Breast epithelium (tissue), 4 donors: ENCODE measurements at regions of chr6 and their contacts with region 1.

Region 1: GRCh38 chr6:32853541-32854375 is at the starts of genes PSMB9 and TAP1:
- DNase-seq: peak; percentile 85 to 92
- H3K4me3 ChIP-seq: peak within 1 kb of the TSS; percentile 76 to 99 (median 91)
- H3K27ac ChIP-seq: peak within 1 kb of the TSS; percentile 96 to 100
- H3K4me1 ChIP-seq: no peaks in the 10 kb centered on the region
- H3K27me3 ChIP-seq: no peaks in the 10 kb centered on the region
- CTCF ChIP-seq: peak; percentile 59 to 77 (median 67)
- POLR2A ChIP-seq: peak; percentile 93
- total RNA-seq, gene PSMB9: 16.8 to 25.9 (median 19.2) TPM
- total RNA-seq, gene TAP1: 24.2 to 40.6 (median 28.7) TPM

Region 2: GRCh38 chr6:32825966-32826365 is 27.8 kb before region 1 on chr6:
- intact Hi-C with region 1: loop called (anchors 1 kb)
- DNase-seq: no peak
- H3K4me3 ChIP-seq: no peak overlapping the region
- H3K27ac ChIP-seq: peak overlapping the region in 1 of 2 donors; percentile 48
- H3K4me1 ChIP-seq: no peaks in the 10 kb centered on the region
- H3K27me3 ChIP-seq: no peaks in the 10 kb centered on the region
- CTCF ChIP-seq: peak in 2 of 3 donors; percentile 29 to 43
- POLR2A ChIP-seq: no peak

Region 3: DNA sequence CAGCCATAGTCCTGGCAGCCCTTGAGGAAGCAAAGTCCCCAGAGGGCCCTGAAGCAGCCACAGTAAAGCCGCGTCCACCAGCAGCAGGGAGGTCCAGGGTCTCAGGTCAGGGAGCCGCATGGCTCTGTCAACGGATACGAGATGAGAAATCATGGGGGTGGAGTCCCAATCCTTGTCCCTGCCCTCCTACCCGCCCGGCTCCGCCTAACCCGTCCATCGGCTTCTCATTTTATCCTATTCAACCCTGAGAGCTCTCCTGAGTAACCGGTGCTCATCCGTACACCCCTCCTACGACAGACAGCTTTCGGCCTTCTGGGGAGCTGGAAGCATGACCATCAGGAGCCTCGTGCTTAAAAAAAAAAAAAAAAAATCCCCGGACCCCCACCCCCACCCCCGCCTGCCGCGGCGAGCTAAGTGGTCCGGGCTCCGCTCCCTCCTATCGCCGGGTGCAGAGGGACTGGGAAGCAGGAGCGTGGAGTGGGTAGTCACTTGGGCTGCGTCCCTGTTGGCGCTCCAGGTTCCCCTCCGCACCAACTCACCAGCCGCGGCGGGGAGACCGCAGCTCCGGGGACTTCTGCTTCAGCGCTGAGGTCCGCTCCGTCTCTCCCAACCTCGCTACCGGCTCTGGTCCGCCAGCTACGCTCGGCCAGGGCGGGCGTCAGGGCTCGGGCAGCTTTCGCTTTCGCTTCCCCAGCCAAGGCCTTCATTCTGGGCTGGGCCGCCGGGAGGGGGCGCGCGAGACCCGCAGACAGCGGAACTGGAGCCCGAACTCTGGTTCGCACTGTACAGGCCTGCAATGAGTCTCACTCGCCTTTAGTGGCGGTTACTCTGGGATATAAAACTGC is 15.4 kb before region 1 on chr6 and contains the start of gene TAP2:
- intact Hi-C with region 1: loop called (anchors 1 kb)
- DNase-seq: peak; percentile 93 to 96
- H3K4me3 ChIP-seq: peak within 1 kb of the TSS; percentile 78 to 80 (median 79)
- H3K27ac ChIP-seq: peak within 1 kb of the TSS; percentile 92 to 94
- H3K4me1 ChIP-seq: peaks cover 0 to 15% of the 10 kb centered on the region in 2 donors
- H3K27me3 ChIP-seq: no peaks in the 10 kb centered on the region
- CTCF ChIP-seq: peak; percentile 96 to 99 (median 96)
- POLR2A ChIP-seq: peak; percentile 19
- total RNA-seq, gene TAP2: 7.7 to 18.0 (median 9.5) TPM